Activated naive CD8-positive, alpha-beta T cell treated with anti-CD3 and anti-CD28 coated beads, Interleukin-2, amount 10 ng/mL, durations not matched to agents 7 days and 5 days (primary cell): ENCODE measurements at regions of chr19 and their contacts with region 1.

Region 1: GRCh38 chr19:17125715-17126677 is 50.4 kb downstream of the MYO9B start:
- DNase-seq: peak; percentile 84
- ATAC-seq: peak; percentile 93
- H3K4me3 Mint-ChIP-seq: peak overlapping the region; percentile 89
- H3K27ac Mint-ChIP-seq: peak overlapping the region; percentile 99
- H3K4me1 Mint-ChIP-seq: peaks cover 49% of the 10 kb centered on the region
- H3K27me3 Mint-ChIP-seq: no peaks in the 10 kb centered on the region

Region 2: DNA sequence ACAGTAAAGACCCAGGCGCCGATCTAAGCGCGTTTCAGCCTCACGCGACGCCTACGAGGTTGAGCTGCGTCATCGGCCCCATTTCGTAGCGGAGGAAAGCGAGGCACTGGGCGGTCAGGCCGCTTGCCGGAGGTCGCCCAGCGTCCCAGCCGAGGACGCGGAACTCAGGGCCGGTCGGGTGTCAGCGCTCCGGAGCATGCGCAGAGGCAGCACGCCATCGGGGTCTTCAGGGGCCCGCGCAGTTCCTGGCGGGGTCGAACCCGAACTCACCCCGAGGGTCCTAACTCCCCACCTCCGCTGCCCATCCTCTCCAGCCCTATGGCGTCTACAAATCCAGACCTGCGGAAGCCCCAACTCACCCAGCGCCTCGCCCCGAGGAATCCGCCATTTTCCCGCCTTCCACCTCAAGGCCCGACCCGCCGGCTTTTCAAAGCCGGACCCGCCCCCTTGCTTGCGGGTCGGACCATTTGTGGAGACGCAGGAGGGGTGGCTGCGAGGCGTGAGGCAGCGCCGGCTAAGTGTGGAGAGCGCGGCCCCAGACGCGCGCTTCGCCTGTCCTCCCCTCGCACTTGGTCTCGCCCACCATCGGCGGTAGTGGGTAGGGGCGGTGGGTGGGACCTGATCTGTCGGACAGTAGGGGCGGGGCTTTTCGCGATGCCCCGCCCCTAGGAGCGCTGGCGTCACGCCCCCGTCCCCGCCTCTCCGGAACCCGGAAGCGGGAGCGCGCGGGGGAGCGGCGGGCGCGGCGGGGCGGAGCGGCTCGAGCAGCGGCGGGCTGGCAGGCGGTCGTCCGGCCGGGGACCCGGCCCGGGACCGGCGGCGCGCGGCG is 50.7 kb before region 1 on chr19 and contains the starts of genes HAUS8 and MYO9B:
- POLR2A ChIA-PET with region 1: interaction called, 64 read pairs
- DNase-seq: peak; percentile 99
- ATAC-seq: peak; percentile 90
- H3K4me3 Mint-ChIP-seq: peak within 1 kb of the TSS; percentile 99
- H3K27ac Mint-ChIP-seq: peak within 1 kb of the TSS; percentile 98
- H3K4me1 Mint-ChIP-seq: peaks cover 45% of the 10 kb centered on the region
- H3K27me3 Mint-ChIP-seq: no peaks in the 10 kb centered on the region
- total RNA-seq, gene HAUS8: 50.7 to 51.7 TPM
- total RNA-seq, gene MYO9B: 275 to 285 TPM

Region 3: GRCh38 chr19:17107525-17108452 is 18.2 kb before region 1 on chr19:
- POLR2A ChIA-PET with region 1: interaction called, 26 read pairs
- DNase-seq: no peak
- ATAC-seq: no peak
- H3K4me3 Mint-ChIP-seq: no peak overlapping the region
- H3K27ac Mint-ChIP-seq: no peak overlapping the region
- H3K4me1 Mint-ChIP-seq: peaks cover 43% of the 10 kb centered on the region
- H3K27me3 Mint-ChIP-seq: no peaks in the 10 kb centered on the region